HEK293 (cell line): ENCODE measurements at regions of chr20 and their contacts with region 1.

Region 1: GRCh38 chr20:34579191-34579978 is 20.9 kb downstream of the MAP1LC3A start:
- H3K4me3 ChIP-seq: no peak overlapping the region
- H3K27ac ChIP-seq: no peak overlapping the region
- H3K4me1 ChIP-seq: no peaks in the 10 kb centered on the region
- CTCF ChIP-seq: peak; percentile 79

Region 2: GRCh38 chr20:34708621-34709043 is 129.2 kb after region 1 on chr20:
- CTCF ChIA-PET with region 1: interaction called, 21 read pairs
- POLR2A ChIA-PET with region 1: interaction called, 5 read pairs
- H3K4me3 ChIP-seq: peak overlapping the region; percentile 59
- H3K27ac ChIP-seq: peak overlapping the region; percentile 86; the same call in 1 of the 2 replicates
- H3K4me1 ChIP-seq: peaks cover 12% of the 10 kb centered on the region
- CTCF ChIP-seq: peak; percentile 55

Region 3: DNA sequence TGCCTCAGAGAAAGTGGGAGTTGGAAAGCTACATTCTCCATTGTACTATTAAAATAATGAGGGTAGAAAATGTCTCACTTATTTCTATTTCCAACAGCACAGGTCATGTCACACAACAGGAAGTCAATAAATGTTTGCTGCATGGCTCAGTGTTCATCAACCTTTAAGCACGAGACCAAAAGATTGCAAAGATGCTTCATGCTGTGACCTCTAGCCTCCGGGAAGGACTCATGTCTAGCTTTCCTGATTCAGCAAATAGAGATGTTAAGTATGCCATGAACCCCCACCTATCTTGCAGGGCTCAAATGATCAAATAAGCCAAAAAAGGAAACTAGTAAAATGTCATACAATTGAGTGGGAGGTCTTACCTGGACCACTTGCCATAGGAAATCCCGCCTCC is 188.7 kb after region 1 on chr20:
- CTCF ChIA-PET with region 1: interaction called, 16 read pairs
- POLR2A ChIA-PET with region 1: no interaction called
- H3K4me3 ChIP-seq: no peak overlapping the region
- H3K27ac ChIP-seq: no peak overlapping the region
- H3K4me1 ChIP-seq: no peaks in the 10 kb centered on the region
- CTCF ChIP-seq: no peak